Activated CD4-positive, alpha-beta memory T cell treated with anti-CD3 and anti-CD28 coated beads for 36 hours (primary cell): ENCODE measurements at regions of chr9 and their contacts with region 1.

Region 1: GRCh38 chr9:73200694-73201452 is 49.2 kb downstream of the ANXA1 start:
- DNase-seq: no peak
- H3K4me3 Mint-ChIP-seq: no peak overlapping the region
- H3K27ac Mint-ChIP-seq: no peak overlapping the region
- H3K4me1 Mint-ChIP-seq: no peaks in the 10 kb centered on the region
- H3K27me3 Mint-ChIP-seq: peaks cover 19% of the 10 kb centered on the region

Region 2: DNA sequence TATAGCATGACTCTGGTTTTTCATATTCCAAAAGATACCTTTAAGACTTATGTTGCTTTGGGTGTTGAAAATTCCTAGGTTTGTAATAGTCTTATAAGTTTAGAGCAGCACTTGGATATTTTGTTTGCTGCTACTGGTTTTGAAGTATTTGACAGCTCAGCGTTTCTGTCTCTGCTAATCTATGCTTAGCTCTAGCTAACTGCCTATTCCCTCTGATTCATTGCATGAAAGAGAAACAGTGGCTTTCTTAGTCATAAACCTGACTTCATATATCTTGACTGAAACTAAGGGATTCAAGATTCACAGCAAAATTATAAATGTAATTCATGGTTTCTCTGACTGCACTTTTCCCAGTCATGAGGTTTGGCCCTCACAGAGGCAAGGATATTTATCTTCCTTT is 84.8 kb before region 1 on chr9:
- CTCF ChIA-PET with region 1: no interaction called
- POLR2A ChIA-PET with region 1: no interaction called
- intact Hi-C with region 1: no loop called
- DNase-seq: no peak
- H3K4me3 Mint-ChIP-seq: no peak overlapping the region
- H3K27ac Mint-ChIP-seq: no peak overlapping the region
- H3K4me1 Mint-ChIP-seq: peaks cover 42% of the 10 kb centered on the region
- H3K27me3 Mint-ChIP-seq: no peaks in the 10 kb centered on the region

Region 3: DNA sequence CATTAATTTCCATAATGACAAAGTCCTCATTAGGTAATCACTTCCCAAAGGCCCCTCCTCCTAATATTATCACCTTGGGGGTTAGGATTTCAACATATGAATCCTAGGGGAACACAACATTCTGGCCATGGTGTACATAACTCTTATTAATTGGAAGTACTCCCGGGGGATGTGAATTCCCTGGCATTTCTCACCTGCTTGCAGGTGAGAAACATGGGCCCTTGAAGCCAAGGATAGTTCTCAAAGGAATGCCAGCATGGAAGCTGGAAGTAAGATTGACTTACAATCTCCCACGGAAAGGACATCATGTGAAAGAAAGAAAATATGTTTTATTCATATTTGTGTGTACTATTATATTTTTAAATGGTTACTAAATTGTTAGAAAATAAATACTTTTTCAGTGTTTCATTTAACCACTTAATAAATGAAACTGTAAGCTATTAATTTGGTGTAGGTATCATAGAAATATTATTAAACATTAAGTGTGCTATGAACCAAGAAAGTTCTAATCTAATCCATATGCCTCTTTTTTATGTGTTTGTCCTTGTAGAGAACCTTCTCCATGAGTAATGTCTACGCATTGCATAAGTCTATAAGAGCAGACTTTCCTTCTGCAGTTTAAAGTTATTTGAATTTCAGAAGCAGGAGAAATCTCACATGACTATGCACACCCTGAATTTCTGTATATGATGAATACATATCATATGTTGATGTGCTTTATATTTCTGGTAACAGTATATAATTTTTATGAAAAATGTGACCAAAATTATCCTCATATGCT is 10.2 kb after region 1 on chr9:
- CTCF ChIA-PET with region 1: interaction called, 22 read pairs
- POLR2A ChIA-PET with region 1: no interaction called
- intact Hi-C with region 1: no loop called
- DNase-seq: no peak
- H3K4me3 Mint-ChIP-seq: no peak overlapping the region
- H3K27ac Mint-ChIP-seq: no peak overlapping the region
- H3K4me1 Mint-ChIP-seq: peaks cover 5% of the 10 kb centered on the region
- H3K27me3 Mint-ChIP-seq: peaks cover 5% of the 10 kb centered on the region

Region 4: GRCh38 chr9:74379718-74380117 is 1178.8 kb after region 1 on chr9:
- CTCF ChIA-PET with region 1: interaction called, 4 read pairs
- POLR2A ChIA-PET with region 1: no interaction called
- intact Hi-C with region 1: loop called (anchors 2 kb)
- DNase-seq: peak; percentile 31
- H3K4me3 Mint-ChIP-seq: no peak overlapping the region
- H3K27ac Mint-ChIP-seq: no peak overlapping the region
- H3K4me1 Mint-ChIP-seq: no peaks in the 10 kb centered on the region
- H3K27me3 Mint-ChIP-seq: no peaks in the 10 kb centered on the region

Region 5: GRCh38 chr9:74570879-74571512 is 1370.1 kb after region 1 on chr9:
- CTCF ChIA-PET with region 1: interaction called, 4 read pairs
- POLR2A ChIA-PET with region 1: no interaction called
- intact Hi-C with region 1: loop called (anchors 2 kb)
- DNase-seq: peak; percentile 19
- H3K4me3 Mint-ChIP-seq: no peak overlapping the region
- H3K27ac Mint-ChIP-seq: no peak overlapping the region
- H3K4me1 Mint-ChIP-seq: no peaks in the 10 kb centered on the region
- H3K27me3 Mint-ChIP-seq: peaks cover 2% of the 10 kb centered on the region

Region 6: DNA sequence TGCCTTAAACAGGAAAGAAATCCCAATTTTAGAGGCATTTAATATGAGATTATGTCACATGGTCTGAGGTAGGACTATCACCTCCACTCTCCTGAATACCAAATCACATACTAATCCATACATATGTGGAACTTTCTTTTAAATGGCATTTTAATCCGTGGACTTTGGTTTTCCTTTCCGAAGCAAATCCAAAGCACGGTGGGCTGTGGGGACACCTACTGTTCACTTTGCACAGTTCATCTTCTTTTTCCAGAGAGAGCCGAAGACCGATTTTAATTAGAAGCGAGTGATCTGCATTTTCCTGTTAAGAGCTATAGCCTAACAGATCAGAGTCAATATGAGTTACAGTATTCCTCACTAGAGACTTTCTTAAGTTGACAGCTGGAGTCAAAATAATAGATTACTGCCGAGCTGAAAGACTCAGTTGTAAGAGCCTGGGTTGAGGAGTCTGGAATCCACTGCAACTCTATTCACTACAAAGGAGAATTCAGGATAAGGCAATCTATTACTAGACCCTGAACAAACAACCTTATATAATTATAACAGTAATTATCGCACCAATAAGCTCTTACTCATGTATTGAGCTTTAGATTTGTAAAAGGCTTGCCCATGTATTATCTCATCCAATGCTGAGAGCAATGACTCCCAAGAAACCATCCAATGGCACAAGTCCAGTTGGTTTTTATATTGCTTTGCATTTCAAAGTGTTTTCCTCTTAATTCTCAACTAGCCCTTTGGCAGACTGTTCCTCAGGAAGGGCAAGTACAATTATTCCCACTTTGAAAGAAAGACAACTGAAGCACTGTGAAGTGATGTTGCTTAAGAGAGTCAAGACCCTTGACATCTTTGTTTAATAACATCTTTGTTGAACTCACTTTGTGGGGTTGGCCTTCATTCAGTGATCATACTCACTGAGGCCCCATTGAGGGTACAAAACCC is 1542.2 kb after region 1 on chr9:
- CTCF ChIA-PET with region 1: no interaction called
- POLR2A ChIA-PET with region 1: no interaction called
- intact Hi-C with region 1: loop called (anchors 10 kb)
- DNase-seq: peak; percentile 19
- H3K4me3 Mint-ChIP-seq: no peak overlapping the region
- H3K27ac Mint-ChIP-seq: no peak overlapping the region
- H3K4me1 Mint-ChIP-seq: no peaks in the 10 kb centered on the region
- H3K27me3 Mint-ChIP-seq: peaks cover 20% of the 10 kb centered on the region